GM12878 (cell line): ENCODE measurements at regions of chr1 and their contacts with region 1.

Region 1: DNA sequence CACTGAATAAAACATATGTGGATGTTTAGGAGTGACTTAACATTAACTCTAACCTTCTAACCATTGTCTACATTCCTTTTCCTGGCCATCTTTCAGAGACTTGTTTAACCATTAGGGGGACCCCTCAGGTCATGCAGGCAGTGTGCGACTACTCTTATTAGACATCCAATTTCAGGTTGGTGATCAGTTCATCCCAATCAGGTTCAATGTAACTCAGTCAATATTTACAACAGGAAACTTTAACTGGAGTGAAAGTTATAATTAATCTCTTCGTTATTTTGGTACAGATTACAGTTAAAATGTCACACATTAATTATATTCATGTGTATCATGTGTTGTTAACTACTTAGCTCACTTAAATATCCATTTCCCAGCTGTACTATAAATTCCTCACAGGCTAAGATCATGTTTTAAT is 68.8 kb upstream of the RGS1 start:
- DNase-seq: peak; percentile 66
- ATAC-seq: peak; percentile 99
- H3K4me3 ChIP-seq: no peak overlapping the region
- H3K27ac ChIP-seq: no peak overlapping the region
- H3K4me1 ChIP-seq: no peaks in the 10 kb centered on the region; the same call in 1 of the 2 replicates
- H3K27me3 ChIP-seq: no peaks in the 10 kb centered on the region
- CTCF ChIP-seq: peak; percentile 69 to 93 (median 70); a peak in 5 of 6 replicates
- EP300 ChIP-seq: no peak
- POLR2A ChIP-seq: no peak
- RAD21 ChIP-seq: peak; percentile 98

Region 2: DNA sequence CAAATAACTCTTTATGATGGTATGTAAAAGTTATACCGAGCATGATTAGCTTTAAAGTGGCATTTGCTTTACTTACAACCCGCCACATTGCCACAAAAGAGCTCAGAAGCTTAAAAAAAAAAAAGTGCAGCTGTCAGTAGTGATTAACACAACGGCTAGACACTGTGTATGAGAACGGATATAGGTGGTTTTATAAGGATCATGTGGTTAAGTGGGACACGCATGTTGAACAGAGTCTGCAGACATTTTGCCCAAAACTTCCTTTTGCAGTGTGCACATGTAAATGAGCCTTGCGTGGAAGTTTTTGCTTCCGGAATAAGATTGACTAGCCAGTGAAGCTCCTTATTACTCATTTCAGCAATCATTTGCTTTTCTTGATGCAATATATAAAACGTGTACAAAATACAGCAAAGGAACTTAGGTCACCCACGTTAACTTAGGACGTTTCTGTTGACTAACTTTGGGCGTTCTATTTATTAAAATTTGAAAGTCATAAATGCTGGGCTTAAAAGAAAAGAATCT is 10.1 kb after region 1 on chr1:
- CTCF ChIA-PET with region 1: interaction called, 25 read pairs
- POLR2A ChIA-PET with region 1: interaction called, 4 read pairs
- RAD21 ChIA-PET with region 1: interaction called, 22 read pairs
- SMC1A ChIA-PET with region 1: interaction called, 23 read pairs
- in situ Hi-C with region 1: no loop called
- intact Hi-C with region 1: no loop called
- DNase-seq: peak; percentile 99
- ATAC-seq: peak; percentile 87
- H3K4me3 ChIP-seq: 0 out of 2 replicates have a peak overlapping the region, but pooled peaks have one; percentile 34
- H3K27ac ChIP-seq: peak overlapping the region; percentile 72
- H3K4me1 ChIP-seq: peaks cover 22% of the 10 kb centered on the region; the same call in 1 of the 2 replicates
- H3K27me3 ChIP-seq: no peaks in the 10 kb centered on the region
- CTCF ChIP-seq: no peak
- EP300 ChIP-seq: peak; percentile 99
- POLR2A ChIP-seq: no peak
- RAD21 ChIP-seq: peak; percentile 14; the same call in 1 of the 2 replicates

Region 3: DNA sequence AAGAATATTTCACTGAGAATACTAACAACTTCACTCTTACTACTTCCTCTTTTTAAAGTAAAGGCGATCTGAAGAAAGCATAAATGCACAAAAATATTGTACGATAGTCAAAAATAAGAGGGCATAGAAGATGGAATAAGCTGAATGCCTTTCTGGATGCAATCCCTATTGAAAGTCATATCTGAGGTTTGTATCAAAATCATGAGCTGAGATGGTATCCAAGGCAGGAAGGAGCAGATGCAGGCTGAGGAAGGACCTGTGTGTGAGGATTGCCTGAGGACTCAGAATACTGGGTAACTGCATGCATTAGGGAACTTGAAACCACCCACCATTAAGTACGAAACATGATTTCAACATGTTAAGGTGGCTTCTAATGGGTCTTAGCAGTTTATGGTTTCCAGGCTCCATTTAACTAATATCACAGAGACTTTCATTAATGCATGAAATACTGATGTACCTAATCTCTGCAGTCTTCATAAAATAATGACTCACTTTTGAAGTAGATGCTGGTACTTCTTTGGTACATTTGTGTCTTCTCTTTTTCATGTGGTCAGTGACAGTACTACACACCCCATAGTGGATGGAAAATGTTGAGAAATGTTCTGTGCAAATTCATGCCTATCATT is 39.3 kb after region 1 on chr1:
- CTCF ChIA-PET with region 1: interaction called, 78 read pairs
- POLR2A ChIA-PET with region 1: interaction called, 123 read pairs
- RAD21 ChIA-PET with region 1: interaction called, 288 read pairs
- SMC1A ChIA-PET with region 1: interaction called, 81 read pairs
- in situ Hi-C with region 1: no loop called
- intact Hi-C with region 1: no loop called
- DNase-seq: peak; percentile 87
- ATAC-seq: peak; percentile 67
- H3K4me3 ChIP-seq: no peak overlapping the region; the same call in 1 of the 2 replicates
- H3K27ac ChIP-seq: peak overlapping the region; percentile 84
- H3K4me1 ChIP-seq: peaks cover 53% of the 10 kb centered on the region
- H3K27me3 ChIP-seq: no peaks in the 10 kb centered on the region
- CTCF ChIP-seq: peak in 2 of 3 experiments; percentile 37 to 41; a peak in 2 of 6 replicates
- EP300 ChIP-seq: peak in 1 of 2 experiments; percentile 39; a peak in 1 of 4 replicates
- POLR2A ChIP-seq: 0 out of 2 replicates have a peak, but pooled peaks have one; percentile 34
- RAD21 ChIP-seq: peak; percentile 29; the same call in 1 of the 2 replicates

Region 4: GRCh38 chr1:192573499-192573898 is 66.8 kb after region 1 on chr1:
- CTCF ChIA-PET with region 1: interaction called, 35 read pairs
- POLR2A ChIA-PET with region 1: interaction called, 7 read pairs
- RAD21 ChIA-PET with region 1: interaction called, 35 read pairs
- SMC1A ChIA-PET with region 1: interaction called, 35 read pairs
- in situ Hi-C with region 1: no loop called
- intact Hi-C with region 1: no loop called
- DNase-seq: no peak
- ATAC-seq: no peak
- H3K4me3 ChIP-seq: no peak overlapping the region
- H3K27ac ChIP-seq: no peak overlapping the region
- H3K4me1 ChIP-seq: peaks cover 3% of the 10 kb centered on the region; the same call in 1 of the 2 replicates
- H3K27me3 ChIP-seq: no peaks in the 10 kb centered on the region
- CTCF ChIP-seq: no peak
- EP300 ChIP-seq: no peak
- POLR2A ChIP-seq: no peak
- RAD21 ChIP-seq: no peak

Region 5: DNA sequence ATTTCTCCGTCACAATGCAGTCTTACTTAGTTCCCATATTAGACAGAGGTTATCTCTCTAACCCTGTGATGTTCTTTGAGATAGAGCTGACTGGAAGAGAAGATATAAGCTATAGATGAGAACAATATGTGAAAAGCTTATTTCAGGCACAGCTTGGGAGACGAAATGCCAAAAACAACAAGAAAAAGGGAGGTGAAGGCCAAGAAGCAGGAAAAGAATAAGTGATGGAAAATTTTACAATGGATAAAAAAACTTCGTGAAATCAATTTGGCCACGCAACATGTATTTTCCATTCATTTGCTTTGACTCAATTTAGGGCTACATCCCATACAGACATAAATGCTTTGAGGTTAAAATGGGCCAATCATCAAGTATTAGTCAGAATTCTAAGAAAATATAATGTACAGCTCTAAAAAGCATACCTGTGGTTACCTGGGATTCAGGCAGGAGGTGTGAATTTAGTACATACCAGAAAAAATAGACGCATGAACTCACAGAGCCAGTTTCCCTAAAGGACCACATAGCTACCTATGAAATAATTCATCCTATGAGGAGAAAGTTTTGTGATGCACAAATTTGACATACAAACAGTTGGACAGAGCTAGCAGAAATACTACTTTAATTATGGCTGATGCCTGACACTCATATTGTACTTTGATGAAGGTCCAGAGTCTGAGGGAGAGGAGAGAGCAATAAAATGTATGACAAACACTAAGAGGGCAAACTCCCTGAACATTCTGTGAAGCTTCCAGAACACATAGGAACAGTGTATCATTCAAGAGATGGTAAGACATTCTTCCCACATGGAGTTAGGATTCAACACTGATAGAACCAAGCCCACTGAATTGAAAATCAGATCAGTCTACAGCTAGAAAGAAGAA is 80.9 kb after region 1 on chr1:
- CTCF ChIA-PET with region 1: interaction called, 8 read pairs
- POLR2A ChIA-PET with region 1: interaction called, 4 read pairs
- RAD21 ChIA-PET with region 1: interaction called, 35 read pairs
- SMC1A ChIA-PET with region 1: interaction called, 25 read pairs
- in situ Hi-C with region 1: no loop called
- intact Hi-C with region 1: no loop called
- DNase-seq: no peak
- ATAC-seq: no peak
- H3K4me3 ChIP-seq: no peak overlapping the region
- H3K27ac ChIP-seq: no peak overlapping the region
- H3K4me1 ChIP-seq: no peaks in the 10 kb centered on the region
- H3K27me3 ChIP-seq: no peaks in the 10 kb centered on the region
- CTCF ChIP-seq: no peak
- EP300 ChIP-seq: no peak
- POLR2A ChIP-seq: no peak
- RAD21 ChIP-seq: no peak

Region 6: GRCh38 chr1:192739476-192740184 is 232.9 kb after region 1 on chr1:
- CTCF ChIA-PET with region 1: no interaction called
- POLR2A ChIA-PET with region 1: no interaction called
- RAD21 ChIA-PET with region 1: no interaction called
- SMC1A ChIA-PET with region 1: no interaction called
- in situ Hi-C with region 1: no loop called
- intact Hi-C with region 1: no loop called
- DNase-seq: no peak
- ATAC-seq: no peak
- H3K4me3 ChIP-seq: no peak overlapping the region
- H3K27ac ChIP-seq: no peak overlapping the region
- H3K4me1 ChIP-seq: no peaks in the 10 kb centered on the region
- H3K27me3 ChIP-seq: no peaks in the 10 kb centered on the region; a peak in 1 of 4 replicates
- CTCF ChIP-seq: no peak
- EP300 ChIP-seq: no peak
- POLR2A ChIP-seq: no peak
- RAD21 ChIP-seq: no peak